Activated CD4-positive, alpha-beta T cell treated with anti-CD3 and anti-CD28 coated beads, Interleukin-2, amount 10 ng/mL, durations not matched to agents 24 days and 14 days (primary cell): ENCODE measurements at regions of chr14 and their contacts with region 1.

Region 1: GRCh38 chr14:97620066-97620465 is 822.9 kb downstream of the VRK1 start:
- DNase-seq: no peak
- H3K4me3 Mint-ChIP-seq: peak overlapping the region; percentile 71
- H3K27ac Mint-ChIP-seq: peak overlapping the region; percentile 63
- H3K4me1 Mint-ChIP-seq: peaks cover 33% of the 10 kb centered on the region
- H3K27me3 Mint-ChIP-seq: no peaks in the 10 kb centered on the region

Region 2: GRCh38 chr14:97602438-97603117 is 17.5 kb before region 1 on chr14:
- intact Hi-C with region 1: loop called (anchors 2 kb)
- DNase-seq: peak; percentile 90
- H3K4me3 Mint-ChIP-seq: no peak overlapping the region
- H3K27ac Mint-ChIP-seq: no peak overlapping the region
- H3K4me1 Mint-ChIP-seq: peaks cover 31% of the 10 kb centered on the region
- H3K27me3 Mint-ChIP-seq: no peaks in the 10 kb centered on the region

Region 3: DNA sequence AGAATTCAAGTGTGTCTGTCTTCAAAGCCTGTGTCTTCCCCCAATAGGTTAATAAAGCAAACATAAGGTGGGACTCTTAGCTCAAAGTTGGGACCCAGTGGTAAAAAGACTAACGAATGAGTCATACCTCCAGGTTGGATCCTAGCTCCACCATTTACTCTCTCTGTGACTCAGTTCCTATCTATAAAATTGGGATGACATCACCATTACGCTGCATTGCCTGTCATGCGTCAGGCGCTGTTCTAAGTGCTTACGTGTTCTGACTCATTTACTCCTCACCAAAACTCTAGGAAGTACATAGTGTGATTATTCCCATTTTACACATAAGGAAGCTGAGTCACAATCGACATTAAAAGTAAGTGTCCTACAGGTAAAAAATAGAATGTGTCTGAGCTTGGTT is 93.0 kb after region 1 on chr14:
- intact Hi-C with region 1: loop called (anchors 5 kb)
- DNase-seq: peak; percentile 55
- H3K4me3 Mint-ChIP-seq: no peak overlapping the region
- H3K27ac Mint-ChIP-seq: no peak overlapping the region
- H3K4me1 Mint-ChIP-seq: peaks cover 32% of the 10 kb centered on the region
- H3K27me3 Mint-ChIP-seq: no peaks in the 10 kb centered on the region